Activated B cell treated with CpG ODN at 0.5 μM for 24 hours (primary cell): ENCODE measurements at regions of chr18 and their contacts with region 1.

Region 1: DNA sequence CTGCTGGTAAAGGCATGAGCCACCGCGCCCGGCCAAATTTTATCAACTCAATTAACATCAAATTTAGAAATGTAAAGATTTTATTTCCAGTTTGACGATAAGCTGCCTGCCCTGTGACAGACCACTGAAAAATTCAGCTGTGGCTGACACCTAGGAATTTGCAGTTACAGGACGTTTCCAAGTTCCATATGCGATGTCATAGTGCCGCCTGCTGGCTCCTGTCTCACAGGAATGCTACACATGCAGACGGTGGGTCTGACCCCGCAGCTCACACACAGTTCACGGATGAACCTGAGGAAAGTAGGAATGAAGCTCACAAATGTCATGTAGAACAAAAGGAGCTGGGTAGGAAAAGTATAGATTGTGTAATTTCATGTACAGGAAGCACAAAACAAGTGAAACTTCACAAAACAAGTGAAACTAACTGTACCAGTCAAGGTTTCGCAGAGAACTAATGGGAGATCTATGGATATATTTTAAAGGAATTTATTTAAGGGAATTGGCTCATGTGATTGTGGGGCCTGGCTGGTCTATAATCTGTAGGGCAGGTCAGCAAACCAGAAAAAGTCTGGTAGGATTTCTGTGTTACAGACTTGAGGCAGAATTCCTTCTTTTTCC is 13.2 kb upstream of the SEH1L start:
- DNase-seq: peak; percentile 62
- ATAC-seq: peak; percentile 89
- H3K4me3 Mint-ChIP-seq: no peak overlapping the region
- H3K27ac Mint-ChIP-seq: no peak overlapping the region
- H3K4me1 Mint-ChIP-seq: no peaks in the 10 kb centered on the region
- H3K27me3 Mint-ChIP-seq: peaks cover 3% of the 10 kb centered on the region
- CTCF ChIP-seq: no peak

Region 2: GRCh38 chr18:11570769-11571168 is 1363.8 kb before region 1 on chr18:
- CTCF ChIA-PET with region 1: no interaction called
- POLR2A ChIA-PET with region 1: no interaction called
- intact Hi-C with region 1: no loop called
- DNase-seq: no peak
- ATAC-seq: no peak
- H3K4me3 Mint-ChIP-seq: no peak overlapping the region
- H3K27ac Mint-ChIP-seq: no peak overlapping the region
- H3K4me1 Mint-ChIP-seq: peaks cover 3% of the 10 kb centered on the region
- H3K27me3 Mint-ChIP-seq: peaks cover 18% of the 10 kb centered on the region
- CTCF ChIP-seq: no peak

Region 3: DNA sequence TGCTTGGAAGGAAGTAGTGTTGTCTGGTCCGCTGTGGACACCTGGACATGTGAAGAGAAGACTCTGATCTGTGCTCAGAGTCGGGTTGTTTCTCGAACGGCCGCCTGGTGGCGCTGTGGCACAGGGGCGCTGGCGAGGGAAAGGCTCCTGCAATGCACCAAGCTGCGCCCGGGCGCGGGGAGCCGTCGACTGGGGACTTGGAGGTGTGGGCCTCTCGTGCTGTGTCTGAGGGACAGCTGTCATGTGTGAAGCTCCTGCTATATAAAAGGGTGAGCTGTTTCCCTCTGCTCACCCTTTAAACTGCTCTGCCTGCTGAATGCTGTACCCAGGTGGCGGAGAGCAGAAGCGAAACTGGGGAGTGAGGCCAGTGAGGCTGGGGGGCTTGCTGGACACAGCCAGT is 1201.5 kb before region 1 on chr18:
- CTCF ChIA-PET with region 1: no interaction called
- POLR2A ChIA-PET with region 1: no interaction called
- intact Hi-C with region 1: no loop called
- DNase-seq: peak; percentile 53
- ATAC-seq: peak; percentile 54
- H3K4me3 Mint-ChIP-seq: peak overlapping the region; percentile 17
- H3K27ac Mint-ChIP-seq: no peak overlapping the region
- H3K4me1 Mint-ChIP-seq: peaks cover 6% of the 10 kb centered on the region
- H3K27me3 Mint-ChIP-seq: peaks cover 25% of the 10 kb centered on the region
- CTCF ChIP-seq: peak; percentile 30

Region 4: DNA sequence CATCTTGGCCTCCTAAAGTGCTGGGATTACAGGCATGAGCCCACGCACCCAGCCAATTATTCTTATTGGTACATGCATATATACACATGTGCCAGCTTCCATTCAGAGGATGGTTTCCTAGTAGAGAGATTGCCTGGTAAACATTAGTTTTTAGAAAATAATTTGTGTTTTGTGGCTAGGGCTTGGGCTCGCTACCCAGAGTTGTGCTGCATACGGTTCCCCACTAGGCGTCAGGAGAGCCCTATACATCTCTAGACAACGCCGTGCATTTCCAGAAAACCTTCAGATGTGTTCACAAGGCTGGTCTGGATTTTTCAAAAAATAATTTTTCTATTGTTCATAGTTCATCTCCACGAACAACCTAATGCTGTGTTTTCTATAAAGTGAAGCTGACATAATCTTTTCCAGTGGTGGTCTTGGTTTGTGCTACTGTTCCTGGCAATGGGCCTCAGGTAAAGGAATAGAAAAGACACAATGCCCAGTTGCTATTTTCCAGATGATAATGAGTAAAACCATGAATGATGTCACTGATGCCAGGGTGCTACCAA is 542.9 kb before region 1 on chr18:
- CTCF ChIA-PET with region 1: interaction called, 10 read pairs
- POLR2A ChIA-PET with region 1: no interaction called
- intact Hi-C with region 1: loop called (anchors 1 kb)
- DNase-seq: no peak
- ATAC-seq: peak; percentile 98
- H3K4me3 Mint-ChIP-seq: no peak overlapping the region
- H3K27ac Mint-ChIP-seq: no peak overlapping the region
- H3K4me1 Mint-ChIP-seq: no peaks in the 10 kb centered on the region
- H3K27me3 Mint-ChIP-seq: peaks cover 13% of the 10 kb centered on the region
- CTCF ChIP-seq: no peak

Region 5: DNA sequence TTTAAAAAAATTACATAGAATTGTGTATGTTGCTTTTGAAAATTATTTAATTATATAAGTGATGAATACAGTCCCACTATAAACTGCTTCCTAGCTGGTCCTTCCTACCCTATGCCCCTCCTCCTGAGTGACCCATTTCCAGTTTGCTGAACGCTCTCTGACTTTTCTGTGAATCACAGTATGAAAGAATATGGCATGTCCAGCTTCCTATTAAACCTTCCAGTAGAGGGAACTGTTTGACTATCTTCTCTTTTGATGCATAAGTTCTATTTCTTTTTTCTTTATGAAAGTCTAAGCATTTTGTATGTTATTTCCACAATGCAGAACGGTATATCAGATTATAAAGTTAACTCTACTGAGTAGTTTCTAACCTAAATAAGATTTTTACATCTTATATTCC is 190.5 kb before region 1 on chr18:
- CTCF ChIA-PET with region 1: interaction called, 47 read pairs
- POLR2A ChIA-PET with region 1: no interaction called
- intact Hi-C with region 1: loop called (anchors 1 kb)
- DNase-seq: no peak
- ATAC-seq: peak; percentile 47
- H3K4me3 Mint-ChIP-seq: no peak overlapping the region
- H3K27ac Mint-ChIP-seq: no peak overlapping the region
- H3K4me1 Mint-ChIP-seq: no peaks in the 10 kb centered on the region
- H3K27me3 Mint-ChIP-seq: peaks cover 7% of the 10 kb centered on the region
- CTCF ChIP-seq: no peak

Region 6: DNA sequence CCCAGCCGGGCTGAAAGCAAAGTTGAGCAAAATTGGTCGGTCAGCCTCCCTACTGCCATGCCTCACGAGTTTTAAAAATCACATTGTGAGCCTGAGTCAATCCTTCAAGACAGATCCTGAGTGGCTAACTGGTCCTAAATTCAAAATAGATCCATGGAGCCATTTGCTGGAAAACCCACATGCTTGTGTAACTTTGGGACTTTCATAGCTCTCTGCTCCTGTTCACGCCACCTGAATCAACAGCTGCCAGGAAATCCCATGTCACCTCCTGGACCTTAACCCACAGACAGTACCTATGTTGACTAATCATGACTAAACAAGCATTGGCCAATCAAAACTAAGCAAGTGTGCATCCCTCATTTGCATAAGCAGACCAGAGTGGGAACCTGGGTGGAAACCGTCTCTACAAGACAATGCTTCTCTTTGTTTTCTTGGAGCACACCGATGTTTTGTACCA is 241.2 kb after region 1 on chr18:
- CTCF ChIA-PET with region 1: no interaction called
- POLR2A ChIA-PET with region 1: no interaction called
- intact Hi-C with region 1: no loop called
- DNase-seq: no peak
- ATAC-seq: no peak
- H3K4me3 Mint-ChIP-seq: no peak overlapping the region
- H3K27ac Mint-ChIP-seq: no peak overlapping the region
- H3K4me1 Mint-ChIP-seq: no peaks in the 10 kb centered on the region
- H3K27me3 Mint-ChIP-seq: no peaks in the 10 kb centered on the region
- CTCF ChIP-seq: no peak